ENCODE measurements at regions of chr3 and their contacts with region 1.

Region 1: GRCh38 chr3:179015551-179016020 is 56.0 kb downstream of the ZMAT3 start:
- DNase-seq: peak; percentile 82
- ATAC-seq: peak; percentile 91
- H3K4me3 Mint-ChIP-seq: no peak overlapping the region
- H3K27ac Mint-ChIP-seq: peak overlapping the region; percentile 52
- H3K4me1 Mint-ChIP-seq: peaks cover 29% of the 10 kb centered on the region
- H3K27me3 Mint-ChIP-seq: peaks cover 17% of the 10 kb centered on the region

Region 2: GRCh38 chr3:179147873-179148615 is 132.5 kb after region 1 on chr3 and contains the start of gene PIK3CA:
- CTCF ChIA-PET with region 1: interaction called, 10 read pairs
- DNase-seq: peak; percentile 98
- ATAC-seq: peak; percentile 86
- H3K4me3 Mint-ChIP-seq: no peak within 1 kb of the TSS
- H3K27ac Mint-ChIP-seq: peak within 1 kb of the TSS; percentile 93
- H3K4me1 Mint-ChIP-seq: peaks cover 29% of the 10 kb centered on the region
- H3K27me3 Mint-ChIP-seq: peaks cover 24% of the 10 kb centered on the region
- total RNA-seq, gene PIK3CA: 18.5 to 19.7 TPM

Region 3: DNA sequence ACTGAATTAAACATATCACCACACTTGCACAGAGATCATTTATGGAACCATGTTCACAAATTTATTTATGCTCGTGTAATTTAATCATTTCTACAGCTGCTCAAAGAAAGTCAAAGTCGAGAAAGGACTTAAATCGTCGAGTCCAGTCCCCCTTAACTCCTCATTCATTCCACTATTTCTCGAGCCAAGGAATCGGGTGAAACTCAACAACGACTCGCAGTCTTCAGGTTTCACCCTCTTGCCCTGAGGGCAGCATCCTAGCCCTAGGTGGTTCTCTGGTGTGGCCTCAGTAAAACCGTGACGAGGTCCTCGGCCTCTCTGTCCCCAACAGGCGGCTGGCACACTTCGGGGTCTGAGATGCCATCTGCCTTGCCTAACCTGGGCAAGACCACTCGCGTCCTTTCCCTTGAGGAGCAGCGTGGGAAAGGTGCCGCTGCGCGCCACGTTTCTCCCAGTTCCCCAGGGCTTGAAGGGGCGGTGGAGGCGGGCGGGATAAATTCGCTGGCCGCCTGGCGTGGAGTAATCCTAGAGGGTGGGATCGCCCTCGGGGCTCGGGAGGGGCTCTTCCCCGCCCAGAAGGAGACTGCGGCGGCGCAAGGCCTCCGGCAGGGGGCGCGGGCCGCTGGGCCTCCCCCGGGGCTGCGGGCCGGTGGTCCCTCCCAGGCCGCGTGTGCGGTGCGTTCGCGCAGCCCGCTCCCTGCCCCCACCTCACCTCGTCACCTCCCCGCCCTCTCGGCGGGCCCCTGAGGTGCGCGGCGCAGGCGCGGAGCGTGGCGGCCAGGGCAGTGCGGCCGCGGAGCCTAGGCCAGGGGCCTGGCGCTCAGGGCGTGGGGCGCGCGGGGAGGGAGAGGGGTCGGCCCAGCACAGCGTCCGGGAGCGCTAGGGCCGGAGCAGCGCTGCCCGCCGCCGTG is 307.0 kb after region 1 on chr3 and contains the start of gene ZNF639:
- CTCF ChIA-PET with region 1: interaction called, 11 read pairs
- DNase-seq: peak; percentile 87
- ATAC-seq: peak; percentile 83
- H3K4me3 Mint-ChIP-seq: peak within 1 kb of the TSS; percentile 88
- H3K27ac Mint-ChIP-seq: peak within 1 kb of the TSS; percentile 92
- H3K4me1 Mint-ChIP-seq: peaks cover 36% of the 10 kb centered on the region
- H3K27me3 Mint-ChIP-seq: peaks cover 12% of the 10 kb centered on the region
- total RNA-seq, gene ZNF639: 30.1 to 32.2 TPM

Measured in activated CD8-positive, alpha-beta memory T cell treated with anti-CD3 and anti-CD28 coated beads, Interleukin-2, amount 10 ng/mL, durations not matched to agents 7 days and 5 days (primary cell).